Dorsolateral prefrontal cortex (tissue), 120 donors: ENCODE measurements at regions of chr10 and their contacts with region 1.

Region 1: DNA sequence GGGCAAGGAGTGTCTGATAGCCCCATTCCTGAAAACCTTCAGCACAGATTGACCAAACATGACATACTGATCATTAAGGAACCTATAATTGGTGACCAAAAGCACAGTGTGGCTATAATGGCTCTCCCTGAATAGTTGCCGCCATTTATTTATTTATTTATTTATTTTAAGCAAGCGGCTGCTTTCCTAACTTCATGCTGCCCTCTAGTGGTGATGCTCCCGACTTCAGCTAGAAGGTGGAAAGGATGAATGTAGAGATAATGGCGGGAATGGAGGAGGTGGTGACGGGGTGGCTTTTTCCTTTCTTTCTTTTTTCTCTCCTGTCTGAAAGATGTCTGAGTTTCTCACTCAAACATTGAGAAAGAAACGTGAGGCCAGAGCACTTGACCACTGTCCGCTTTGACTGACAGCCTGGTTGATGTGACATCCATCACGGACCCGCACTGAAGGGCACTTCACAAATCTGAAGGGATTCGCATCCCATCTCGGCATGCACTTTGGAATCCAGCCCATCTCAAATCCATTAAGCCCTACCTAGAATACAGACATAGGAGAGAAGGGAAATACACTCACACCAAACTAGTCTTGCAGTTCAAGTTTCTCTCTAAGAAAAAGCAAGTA is 1090.1 kb downstream of the KCNMA1 start:
- DNase-seq: peak; percentile 29 to 83 (median 74)
- H3K4me3 ChIP-seq: peak overlapping the region in 30 of 59 donors; percentile 5 to 49 (median 33)
- H3K27ac ChIP-seq: no peak overlapping the region
- H3K27me3 ChIP-seq: no peaks in the 10 kb centered on the region
- CTCF ChIP-seq: peak; percentile 59 to 92 (median 84)

Region 2: GRCh38 chr10:76984559-76985443 is 437.3 kb after region 1 on chr10:
- intact Hi-C with region 1: loop called in 1 of 2 experiments (anchors 5 kb)
- DNase-seq: peak; percentile 44 to 80 (median 70)
- H3K4me3 ChIP-seq: no peak overlapping the region
- H3K27ac ChIP-seq: peak overlapping the region in 1 of 59 donors; percentile 6
- H3K27me3 ChIP-seq: no peaks in the 10 kb centered on the region
- CTCF ChIP-seq: peak; percentile 87 to 98 (median 93)